Sciatic nerve (tissue), 2 donors: ENCODE measurements at regions of chr4 and their contacts with region 1.

Region 1: GRCh38 chr4:10353110-10353509 is 104.1 kb downstream of the ZNF518B start:
- DNase-seq: no peak
- ATAC-seq: no peak

Region 2: GRCh38 chr4:10116580-10117358 is 236.3 kb before region 1 on chr4 and contains the start of gene WDR1:
- intact Hi-C with region 1: no loop called
- DNase-seq: peak; percentile 97
- ATAC-seq: peak; percentile 97
- total RNA-seq, gene WDR1: 264 TPM

Region 3: GRCh38 chr4:10281996-10282395 is 71.1 kb before region 1 on chr4:
- intact Hi-C with region 1: loop called (anchors 2 kb)
- DNase-seq: no peak
- ATAC-seq: no peak

Region 4: DNA sequence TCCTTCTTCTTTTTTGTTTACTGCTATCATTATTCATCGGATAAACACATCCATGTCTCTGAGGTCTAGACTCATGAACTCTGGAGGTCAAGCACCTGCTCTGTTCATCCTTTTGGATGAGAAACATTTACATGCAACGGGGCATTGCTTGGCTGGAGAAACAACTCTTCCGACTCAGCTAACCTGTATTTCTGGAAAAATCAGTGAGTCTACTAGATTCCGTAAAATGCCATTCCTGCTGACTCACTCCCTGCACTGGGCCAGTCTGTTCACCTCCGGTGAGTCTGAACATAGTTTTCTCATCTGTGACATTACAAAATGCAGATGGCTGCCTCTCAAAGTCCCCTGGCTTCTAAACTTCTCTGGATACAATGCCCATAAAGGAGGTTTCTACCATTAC is 1261.3 kb after region 1 on chr4:
- intact Hi-C with region 1: no loop called
- DNase-seq: no peak
- ATAC-seq: no peak